ENCODE measurements at regions of chr14 and their contacts with region 1.

Region 1: DNA sequence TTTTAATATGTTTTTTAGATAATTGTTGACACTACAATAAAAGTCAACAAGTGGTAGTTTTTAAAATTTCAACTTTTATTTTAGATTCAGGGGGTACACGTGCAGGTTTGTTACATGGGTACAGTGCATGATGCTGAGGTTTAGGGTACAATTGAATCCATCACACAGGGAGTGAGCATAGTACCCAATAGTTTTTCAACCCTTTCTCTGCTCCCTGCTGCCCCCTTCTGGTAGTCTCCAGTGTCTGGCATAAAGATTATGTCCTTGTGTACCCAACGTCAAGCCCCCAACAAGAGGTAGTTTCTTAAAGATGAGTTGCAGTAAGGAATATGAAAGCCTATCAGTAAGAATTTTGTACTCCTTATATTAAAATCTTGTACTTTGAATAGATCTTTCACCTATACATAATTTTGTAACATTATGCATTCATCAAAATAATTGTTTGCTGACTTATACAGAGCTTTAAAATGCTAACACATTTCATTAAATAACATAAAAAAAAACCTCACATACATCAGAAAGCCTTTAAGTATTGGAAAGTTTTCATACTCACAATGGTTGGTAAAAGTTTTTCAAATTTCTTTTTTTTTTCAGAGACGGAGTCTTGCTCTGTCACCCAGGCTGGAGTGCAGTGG is 5.4 kb upstream of the RALGAPA1 start:
- DNase-seq: peak; percentile 95
- H3K4me3 Mint-ChIP-seq: no peak overlapping the region
- H3K27ac Mint-ChIP-seq: no peak overlapping the region
- H3K4me1 Mint-ChIP-seq: peaks cover 1% of the 10 kb centered on the region
- H3K27me3 Mint-ChIP-seq: peaks cover 4% of the 10 kb centered on the region

Region 2: GRCh38 chr14:35425850-35426249 is 388.6 kb before region 1 on chr14:
- intact Hi-C with region 1: loop called (anchors 5 kb)
- DNase-seq: no peak
- H3K4me3 Mint-ChIP-seq: no peak overlapping the region
- H3K27ac Mint-ChIP-seq: no peak overlapping the region
- H3K4me1 Mint-ChIP-seq: peaks cover 22% of the 10 kb centered on the region
- H3K27me3 Mint-ChIP-seq: no peaks in the 10 kb centered on the region

Measured in activated CD4-positive, alpha-beta T cell treated with anti-CD3 and anti-CD28 coated beads, Interleukin-2, amount 10 ng/mL, durations not matched to agents 24 days and 14 days (primary cell).